ENCODE measurements at regions of chr4 and their contacts with region 1.

Region 1: GRCh38 chr4:22179124-22179874 is 230.7 kb upstream of the KCNIP4 start:
- DNase-seq: peak in 1 of 2 experiments; percentile 17
- H3K4me3 ChIP-seq: no peak overlapping the region
- H3K27ac ChIP-seq: no peak overlapping the region
- H3K4me1 ChIP-seq: no peaks in the 10 kb centered on the region
- H3K27me3 ChIP-seq: no peaks in the 10 kb centered on the region
- CTCF ChIP-seq: no peak

Region 2: DNA sequence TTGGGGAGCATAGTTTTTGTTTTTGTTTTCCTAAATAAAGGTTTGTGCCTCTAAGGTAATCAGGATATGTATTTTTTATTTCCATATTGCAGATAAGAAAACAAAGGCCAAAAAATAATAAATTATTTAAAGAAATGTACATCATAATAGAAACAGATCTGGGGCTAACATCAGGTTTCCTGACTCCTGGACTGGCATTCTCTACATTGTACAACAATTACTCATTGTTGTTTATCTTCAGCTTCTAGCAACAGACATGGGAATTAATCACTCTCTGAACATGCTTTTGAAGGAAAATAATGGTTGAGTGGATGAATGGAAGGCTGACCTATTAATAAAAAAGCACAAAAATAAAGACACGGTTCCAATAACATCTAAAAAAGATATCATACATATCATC is 376.9 kb before region 1 on chr4:
- CTCF ChIA-PET with region 1: no interaction called
- POLR2A ChIA-PET with region 1: no interaction called
- intact Hi-C with region 1: loop called (anchors 1 kb)
- DNase-seq: no peak
- H3K4me3 ChIP-seq: no peak overlapping the region
- H3K27ac ChIP-seq: no peak overlapping the region
- H3K4me1 ChIP-seq: no peaks in the 10 kb centered on the region
- H3K27me3 ChIP-seq: no peaks in the 10 kb centered on the region
- CTCF ChIP-seq: no peak

Region 3: DNA sequence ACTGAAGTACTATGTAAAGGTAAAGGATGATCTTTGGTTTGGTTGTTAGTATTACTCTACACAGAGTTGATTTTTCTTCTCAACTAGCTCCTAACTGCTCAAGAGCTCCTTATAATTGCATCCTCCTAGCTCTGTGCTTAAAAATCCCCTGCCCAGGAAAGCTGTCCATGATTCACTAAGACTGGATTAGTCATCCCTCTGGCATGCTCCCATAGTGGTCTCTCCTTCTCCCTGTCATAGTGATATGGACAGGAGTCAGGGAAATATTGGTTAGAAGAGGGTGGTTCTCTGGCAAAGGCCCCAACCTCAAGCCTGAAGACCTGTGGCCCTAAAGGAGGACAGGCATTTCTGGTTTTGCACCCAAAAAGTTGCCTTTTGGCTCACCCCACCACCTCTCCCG is 11.6 kb after region 1 on chr4:
- CTCF ChIA-PET with region 1: no interaction called
- POLR2A ChIA-PET with region 1: no interaction called
- intact Hi-C with region 1: loop called (anchors 1 kb)
- DNase-seq: peak in 1 of 2 experiments; percentile 39
- H3K4me3 ChIP-seq: no peak overlapping the region
- H3K27ac ChIP-seq: no peak overlapping the region
- H3K4me1 ChIP-seq: no peaks in the 10 kb centered on the region
- H3K27me3 ChIP-seq: peaks cover 11% of the 10 kb centered on the region; the same call in 1 of the 2 replicates
- CTCF ChIP-seq: no peak

Region 4: DNA sequence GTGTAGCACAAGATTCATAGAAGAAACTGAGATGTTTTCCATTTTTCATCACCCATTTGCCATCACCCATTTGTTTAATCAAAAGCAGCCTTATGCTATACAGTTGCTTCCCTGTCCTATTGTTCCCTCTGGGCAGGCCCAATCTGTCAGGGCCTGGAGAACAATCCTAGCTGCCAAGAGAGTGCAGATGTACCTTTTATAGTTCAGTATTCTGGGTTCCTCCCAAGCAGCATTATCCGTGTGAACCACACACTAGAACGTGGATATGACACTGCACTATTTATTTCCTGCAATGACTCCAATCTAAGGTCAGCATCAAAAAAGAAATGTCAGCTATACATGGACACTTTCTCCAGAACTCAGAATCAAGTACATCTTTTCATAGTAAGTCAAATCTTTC is 67.5 kb after region 1 on chr4:
- CTCF ChIA-PET with region 1: no interaction called
- POLR2A ChIA-PET with region 1: no interaction called
- intact Hi-C with region 1: no loop called
- DNase-seq: no peak
- H3K4me3 ChIP-seq: no peak overlapping the region
- H3K27ac ChIP-seq: no peak overlapping the region
- H3K4me1 ChIP-seq: no peaks in the 10 kb centered on the region
- H3K27me3 ChIP-seq: no peaks in the 10 kb centered on the region
- CTCF ChIP-seq: no peak